ENCODE measurements at regions of chr14 and their contacts with region 1.

Region 1: DNA sequence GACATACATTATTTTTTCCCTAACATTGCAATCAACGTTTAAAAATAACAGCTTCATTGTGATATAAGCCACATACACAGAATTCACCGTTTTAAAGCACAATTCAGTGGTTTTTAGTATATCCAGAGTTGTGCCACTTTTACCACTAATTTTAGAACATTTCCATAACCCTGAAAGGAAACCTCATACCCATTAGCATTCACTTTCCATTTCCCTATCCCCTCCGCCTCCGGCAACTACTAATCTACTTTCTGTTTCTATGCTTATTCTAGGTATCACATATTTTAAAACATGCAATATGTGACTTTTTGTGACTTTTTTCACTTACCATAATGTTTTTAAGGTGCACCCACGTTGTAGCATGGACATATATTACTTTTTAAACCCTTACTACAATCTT is 55.6 kb upstream of the ISM2 start:
- DNase-seq: no peak

Region 2: GRCh38 chr14:77151918-77152588 is 402.2 kb before region 1 on chr14:
- intact Hi-C with region 1: loop called (anchors 10 kb)
- DNase-seq: no peak